SK-N-SH (cell line): ENCODE measurements at regions of chr16 and their contacts with region 1.

Region 1: DNA sequence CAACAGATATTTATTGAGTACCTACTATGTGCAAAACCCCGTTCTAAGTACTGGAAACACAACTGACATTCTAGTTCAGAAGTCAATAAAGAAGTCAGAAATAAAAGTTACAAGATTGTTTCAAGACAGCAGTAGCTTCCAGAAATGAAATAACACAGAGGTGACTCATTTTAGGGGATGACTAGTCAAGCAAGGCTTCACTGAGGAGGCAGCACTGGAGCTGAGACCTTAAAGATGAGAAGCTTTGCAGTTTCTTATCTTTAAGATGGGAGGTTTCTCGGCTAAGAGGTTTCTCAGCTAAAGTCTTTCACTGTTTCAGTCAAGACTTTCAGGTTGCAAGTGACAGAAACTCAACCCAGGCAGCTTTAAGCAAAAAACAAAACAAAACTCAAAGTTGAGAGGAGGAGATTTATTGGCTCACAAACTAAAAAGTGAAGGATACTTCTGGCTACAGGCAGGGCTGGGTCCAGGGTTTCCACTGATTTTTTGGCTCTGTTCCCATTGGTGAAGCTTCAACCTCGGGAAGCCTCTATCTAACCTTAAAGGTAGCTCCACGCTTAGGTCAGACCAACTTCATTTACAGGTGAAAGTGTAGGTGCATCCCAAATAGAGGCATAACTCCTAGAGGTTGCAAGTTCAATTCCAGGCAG is 7.4 kb upstream of the MMP2 start:
- DNase-seq: no peak
- H3K4me3 ChIP-seq: peak overlapping the region in 1 of 2 experiments; percentile 19; a peak in 2 of 4 replicates
- H3K27ac ChIP-seq: peak overlapping the region; percentile 60 to 86; a peak in 3 of 4 replicates
- H3K4me1 ChIP-seq: peaks cover 8 to 25% of the 10 kb centered on the region in 2 experiments; a peak in 3 of 4 replicates
- H3K27me3 ChIP-seq: no peaks in the 10 kb centered on the region
- CTCF ChIP-seq: no peak
- EP300 ChIP-seq: peak in 1 of 2 experiments; percentile 62; a peak in 2 of 4 replicates
- RAD21 ChIP-seq: no peak

Region 2: DNA sequence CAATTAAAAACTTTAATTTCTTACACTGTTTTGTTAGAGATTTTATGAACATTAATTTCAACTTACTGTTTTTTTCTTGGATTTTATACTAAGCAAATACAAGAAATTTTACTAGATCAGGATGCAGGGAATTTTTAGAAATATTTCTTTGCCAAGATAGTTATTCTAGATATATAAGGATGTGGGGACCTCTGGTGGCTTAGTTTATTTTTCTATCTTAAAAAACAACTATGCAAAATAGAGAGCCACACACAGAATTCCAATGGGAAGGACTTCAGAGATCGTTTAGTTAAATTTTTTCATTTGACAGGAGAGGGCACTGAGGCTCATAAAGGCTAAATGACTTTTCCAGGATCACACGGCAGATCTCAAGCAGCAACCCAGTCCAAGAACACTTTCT is 71.9 kb after region 1 on chr16:
- CTCF ChIA-PET with region 1: interaction called, 130 read pairs
- POLR2A ChIA-PET with region 1: no interaction called
- DNase-seq: peak; percentile 16
- H3K4me3 ChIP-seq: no peak overlapping the region
- H3K27ac ChIP-seq: peak overlapping the region; percentile 55 to 65; a peak in 2 of 4 replicates
- H3K4me1 ChIP-seq: peaks cover 9 to 15% of the 10 kb centered on the region in 2 experiments; a peak in 3 of 4 replicates
- H3K27me3 ChIP-seq: no peaks in the 10 kb centered on the region
- CTCF ChIP-seq: peak; percentile 65
- EP300 ChIP-seq: no peak
- RAD21 ChIP-seq: peak; percentile 74